Activated T-helper 1 cell treated with anti-CD3 and anti-CD28 coated beads, Interleukin-12 subunit alpha, Interleukin-12 subunit beta, Interleukin-2, Interleukin-4 antibody, amounts not matched to agents 30 ng/mL and 10 ng/mL and 1 ng/mL, durations not matched to agents 14 hours and 24 hours and 36 hours (primary cell): ENCODE measurements at regions of chr12 and their contacts with region 1.

Region 1: DNA sequence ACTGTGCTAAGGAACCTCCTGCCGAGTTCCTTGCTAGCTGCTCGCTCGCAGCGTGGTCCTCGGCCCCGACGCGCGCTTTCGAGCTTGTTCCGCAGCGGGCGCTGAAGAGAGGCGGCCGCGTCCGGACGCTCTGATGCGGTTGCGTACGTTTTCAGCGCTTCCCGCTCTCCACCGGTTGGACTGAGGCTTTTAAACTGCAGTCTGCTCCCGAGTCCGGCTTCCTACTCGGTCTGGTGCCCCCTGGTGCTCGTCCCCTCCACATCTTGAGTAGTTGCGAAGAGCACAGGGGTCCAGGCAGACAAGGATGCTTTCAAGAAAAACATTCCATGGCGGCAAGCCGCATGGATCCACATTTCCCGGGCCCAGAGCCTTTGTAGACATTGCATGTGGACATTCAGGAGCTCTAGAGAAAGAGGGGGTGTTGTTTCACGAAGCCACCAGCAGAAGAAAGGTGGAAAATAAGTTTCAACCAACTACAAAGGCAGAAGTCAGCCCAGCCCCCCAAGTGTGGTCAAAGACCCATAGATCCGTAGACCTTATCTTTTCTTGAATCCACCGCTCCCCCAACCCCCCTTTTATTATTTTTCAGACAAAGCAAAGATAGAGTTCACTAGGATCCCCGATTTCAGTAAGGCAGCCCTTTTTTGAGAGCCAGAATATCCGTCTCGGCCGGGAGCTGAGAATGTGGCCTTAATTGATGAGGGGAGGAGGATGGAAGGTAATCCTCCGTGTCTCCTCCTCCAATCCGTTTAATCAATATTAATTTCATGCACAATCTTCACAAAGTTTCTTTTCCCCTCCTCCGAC is 984 bp upstream of the WNK1 start:
- DNase-seq: peak; percentile 83
- H3K4me3 Mint-ChIP-seq: no peak overlapping the region
- H3K27ac Mint-ChIP-seq: no peak overlapping the region
- H3K4me1 Mint-ChIP-seq: peaks cover 17% of the 10 kb centered on the region
- H3K27me3 Mint-ChIP-seq: no peaks in the 10 kb centered on the region

Region 2: DNA sequence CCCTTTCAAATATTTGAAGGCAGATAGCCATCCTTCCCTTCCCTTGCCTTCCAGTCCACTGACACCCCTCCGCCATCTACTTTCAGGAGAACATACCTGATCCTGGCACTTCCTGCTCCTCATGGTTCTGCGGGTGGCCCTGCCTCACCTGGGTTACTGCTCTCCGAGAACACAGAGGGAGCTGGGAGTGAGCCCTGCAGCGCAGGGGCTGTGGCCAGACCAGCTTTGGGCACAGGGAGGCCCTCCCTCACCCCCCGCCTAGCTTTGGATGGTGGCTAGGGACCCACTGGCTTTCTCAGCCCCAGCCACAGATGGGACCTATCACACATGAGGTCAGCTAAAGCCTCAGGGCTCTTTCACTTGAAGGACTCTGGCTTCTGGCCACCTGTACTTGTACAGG is 672.4 kb before region 1 on chr12:
- intact Hi-C with region 1: no loop called
- DNase-seq: no peak
- H3K4me3 Mint-ChIP-seq: no peak overlapping the region
- H3K27ac Mint-ChIP-seq: no peak overlapping the region
- H3K4me1 Mint-ChIP-seq: no peaks in the 10 kb centered on the region
- H3K27me3 Mint-ChIP-seq: peaks cover 18% of the 10 kb centered on the region

Region 3: DNA sequence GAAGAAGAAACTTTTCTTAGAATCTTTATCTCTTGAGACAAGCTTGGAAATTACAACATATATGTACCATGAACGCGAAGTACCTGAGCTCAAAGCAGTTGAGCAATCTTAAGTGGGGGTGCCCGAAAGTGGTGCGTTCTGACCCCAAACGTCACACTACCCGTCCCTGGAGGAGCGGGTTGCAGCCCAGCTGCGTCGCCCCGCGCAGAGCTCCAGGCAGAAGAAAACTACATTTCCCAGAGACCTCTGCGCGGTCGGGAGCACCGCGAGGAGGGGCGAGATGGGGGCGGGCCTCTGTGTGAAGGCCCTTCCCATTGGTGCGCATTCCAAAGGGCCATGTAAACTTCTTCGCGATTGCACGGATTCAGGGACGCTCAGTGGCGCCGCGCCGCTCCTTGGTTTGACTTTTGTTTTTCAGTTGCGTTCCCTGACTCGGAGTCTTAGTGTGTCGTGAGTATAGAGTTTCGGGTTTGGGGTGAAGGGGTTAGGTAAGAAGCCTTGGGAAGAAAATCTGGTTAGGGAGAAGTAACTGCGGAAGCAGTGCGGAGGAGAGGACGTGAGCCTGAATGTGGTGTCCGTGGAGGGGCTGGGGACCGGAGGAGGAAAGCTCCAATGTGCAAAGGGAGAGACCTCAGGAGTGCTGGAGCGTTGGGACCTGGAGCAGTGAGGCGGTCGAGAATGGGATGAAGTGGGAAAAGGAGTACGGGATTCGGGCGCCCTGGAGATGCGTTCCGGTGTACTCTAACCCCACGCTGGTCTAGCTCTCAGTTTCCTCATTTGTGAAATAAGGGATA is 350.0 kb before region 1 on chr12 and contains the start of gene CCDC77:
- intact Hi-C with region 1: loop called (anchors 5 kb)
- DNase-seq: peak; percentile 93
- H3K4me3 Mint-ChIP-seq: no peak within 1 kb of the TSS
- H3K27ac Mint-ChIP-seq: no peak within 1 kb of the TSS
- H3K4me1 Mint-ChIP-seq: no peaks in the 10 kb centered on the region
- H3K27me3 Mint-ChIP-seq: no peaks in the 10 kb centered on the region
- total RNA-seq, gene CCDC77: 12.6 and 14.6 TPM in 2 replicates

Region 4: DNA sequence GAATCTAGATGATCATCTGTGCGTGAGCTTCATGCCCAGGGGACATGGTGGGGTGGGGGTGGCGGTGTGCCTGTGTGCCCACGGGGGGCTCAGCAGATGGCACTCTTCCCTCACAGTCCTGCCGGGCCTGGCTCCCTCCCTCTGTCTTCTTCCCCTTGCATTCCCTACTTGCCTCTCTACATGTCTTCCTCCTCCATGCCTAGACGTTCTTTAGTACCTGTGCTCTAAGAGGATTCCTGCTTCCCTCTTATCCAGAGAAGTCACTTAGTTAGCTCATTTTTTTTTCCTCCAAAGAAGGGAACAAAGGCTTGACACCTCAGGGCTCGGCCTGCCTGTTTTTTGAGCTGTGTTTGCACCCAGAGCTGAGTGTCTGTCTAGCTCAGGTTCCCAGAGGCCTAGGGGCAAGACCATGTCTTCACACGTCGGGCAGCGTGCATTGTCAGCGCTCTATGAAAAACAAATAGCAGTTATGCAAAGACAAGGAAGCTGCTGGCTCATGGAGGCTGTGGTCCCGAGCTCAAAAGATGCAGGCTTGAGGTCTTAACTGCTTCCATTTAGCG is 136.9 kb before region 1 on chr12:
- intact Hi-C with region 1: loop called (anchors 1 kb)
- DNase-seq: no peak
- H3K4me3 Mint-ChIP-seq: no peak overlapping the region
- H3K27ac Mint-ChIP-seq: no peak overlapping the region
- H3K4me1 Mint-ChIP-seq: peaks cover 62% of the 10 kb centered on the region
- H3K27me3 Mint-ChIP-seq: no peaks in the 10 kb centered on the region

Region 5: DNA sequence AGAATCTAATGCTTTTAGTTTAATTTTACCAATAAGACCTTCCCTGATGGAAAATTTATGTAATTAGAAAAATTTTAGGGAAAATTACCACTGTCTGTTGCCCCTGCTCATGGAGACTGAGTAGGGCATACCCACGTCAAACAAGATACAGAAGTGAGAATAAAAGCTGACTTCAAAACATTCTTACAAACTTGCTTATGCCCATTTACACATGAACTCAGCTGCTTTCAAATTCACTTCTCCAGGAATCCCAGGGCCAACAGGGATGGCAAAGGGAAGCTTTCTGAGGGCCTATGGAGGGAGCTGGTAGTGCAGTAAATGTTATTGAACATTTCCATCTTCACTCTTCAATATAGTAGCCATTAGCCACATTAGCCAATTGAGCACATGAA is 83.3 kb before region 1 on chr12:
- intact Hi-C with region 1: loop called (anchors 1 kb)
- DNase-seq: no peak
- H3K4me3 Mint-ChIP-seq: no peak overlapping the region
- H3K27ac Mint-ChIP-seq: peak overlapping the region; percentile 67
- H3K4me1 Mint-ChIP-seq: peaks cover 79% of the 10 kb centered on the region
- H3K27me3 Mint-ChIP-seq: no peaks in the 10 kb centered on the region

Region 6: GRCh38 chr12:712172-712863 is 39.1 kb before region 1 on chr12:
- intact Hi-C with region 1: loop called (anchors 1 kb)
- DNase-seq: no peak
- H3K4me3 Mint-ChIP-seq: no peak overlapping the region
- H3K27ac Mint-ChIP-seq: peak overlapping the region; percentile 72
- H3K4me1 Mint-ChIP-seq: peaks cover 37% of the 10 kb centered on the region
- H3K27me3 Mint-ChIP-seq: no peaks in the 10 kb centered on the region

Region 7: GRCh38 chr12:737122-737739 is 14.2 kb before region 1 on chr12:
- intact Hi-C with region 1: no loop called
- DNase-seq: no peak
- H3K4me3 Mint-ChIP-seq: no peak overlapping the region
- H3K27ac Mint-ChIP-seq: no peak overlapping the region
- H3K4me1 Mint-ChIP-seq: peaks cover 8% of the 10 kb centered on the region
- H3K27me3 Mint-ChIP-seq: no peaks in the 10 kb centered on the region

Region 8: DNA sequence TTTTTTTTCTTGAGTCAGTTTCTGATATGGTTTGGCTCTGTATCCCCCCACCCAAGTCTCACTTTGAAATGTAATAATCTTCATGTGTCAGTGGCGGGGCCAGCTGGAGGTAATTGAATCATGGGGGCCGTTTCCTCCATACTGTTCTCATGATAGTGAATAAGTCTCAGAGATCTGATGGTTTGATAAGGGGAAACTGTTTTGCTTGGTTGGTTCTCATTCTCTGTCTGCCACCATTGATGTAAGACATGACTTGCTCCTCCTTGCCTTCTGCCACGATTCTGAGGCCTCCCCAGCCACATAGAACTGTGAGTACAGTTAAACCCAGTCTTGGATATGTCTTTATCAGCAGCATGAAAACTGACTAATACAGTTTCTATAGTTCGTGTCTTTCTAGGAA is 43.9 kb after region 1 on chr12:
- intact Hi-C with region 1: loop called (anchors 1 kb)
- DNase-seq: no peak
- H3K4me3 Mint-ChIP-seq: peak overlapping the region; percentile 6
- H3K27ac Mint-ChIP-seq: peak overlapping the region; percentile 87
- H3K4me1 Mint-ChIP-seq: peaks cover 64% of the 10 kb centered on the region
- H3K27me3 Mint-ChIP-seq: no peaks in the 10 kb centered on the region

Region 9: GRCh38 chr12:1093166-1093751 is 341.9 kb after region 1 on chr12:
- intact Hi-C with region 1: loop called (anchors 5 kb)
- DNase-seq: peak; percentile 6
- H3K4me3 Mint-ChIP-seq: no peak overlapping the region
- H3K27ac Mint-ChIP-seq: no peak overlapping the region
- H3K4me1 Mint-ChIP-seq: peaks cover 12% of the 10 kb centered on the region
- H3K27me3 Mint-ChIP-seq: no peaks in the 10 kb centered on the region